HCT116 (cell line): ENCODE measurements at regions of chr1 and their contacts with region 1.

Region 1: DNA sequence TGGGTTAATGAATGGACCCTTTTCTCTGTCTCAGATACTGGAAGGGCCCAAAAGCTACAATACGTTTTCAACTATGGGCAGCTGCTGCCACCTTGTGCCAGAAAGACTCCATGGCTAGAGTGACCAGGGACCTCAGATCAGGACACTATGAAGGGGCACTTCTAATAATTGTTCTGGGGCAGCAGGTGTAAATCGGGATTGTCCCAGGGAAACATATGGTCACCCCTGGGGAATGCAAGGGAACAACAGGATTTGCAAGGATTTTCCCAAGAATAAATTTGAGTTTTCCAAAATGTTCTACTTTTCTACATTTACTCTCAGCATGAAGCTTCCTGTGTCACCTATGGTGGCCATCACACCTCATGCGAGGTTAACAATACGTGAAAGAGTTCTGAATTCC is 12.0 kb upstream of the FCAMR start:
- DNase-seq: peak; percentile 27
- ATAC-seq: peak; percentile 95
- H3K4me3 ChIP-seq: no peak overlapping the region
- H3K27ac ChIP-seq: no peak overlapping the region
- H3K4me1 ChIP-seq: no peaks in the 10 kb centered on the region
- H3K27me3 ChIP-seq: no peaks in the 10 kb centered on the region
- CTCF ChIP-seq: peak; percentile 77 to 87 (median 87)
- POLR2A ChIP-seq: no peak
- RAD21 ChIP-seq: peak; percentile 89

Region 2: GRCh38 chr1:206479183-206480125 is 502.8 kb before region 1 on chr1:
- CTCF ChIA-PET with region 1: interaction called, 6 read pairs
- POLR2A ChIA-PET with region 1: no interaction called
- RAD21 ChIA-PET with region 1: interaction called in 1 of 2 experiments, 7 read pairs
- intact Hi-C with region 1: loop called (anchors 5 kb)
- DNase-seq: no peak
- ATAC-seq: peak; percentile 89
- H3K4me3 ChIP-seq: no peak overlapping the region
- H3K27ac ChIP-seq: no peak overlapping the region
- H3K4me1 ChIP-seq: peaks cover 0 to 6% of the 10 kb centered on the region in 2 experiments; a peak in 1 of 4 replicates
- H3K27me3 ChIP-seq: no peaks in the 10 kb centered on the region
- CTCF ChIP-seq: peak; percentile 73 to 87 (median 77); a peak in 5 of 6 replicates
- POLR2A ChIP-seq: no peak
- RAD21 ChIP-seq: peak; percentile 83

Region 3: GRCh38 chr1:206635080-206635977 is 346.9 kb before region 1 on chr1 and contains the start of gene DYRK3:
- CTCF ChIA-PET with region 1: interaction called, 21 read pairs
- POLR2A ChIA-PET with region 1: no interaction called
- RAD21 ChIA-PET with region 1: interaction called in 1 of 2 experiments, 3 read pairs
- intact Hi-C with region 1: loop called (anchors 10 kb)
- DNase-seq: peak; percentile 72
- ATAC-seq: peak; percentile 91
- H3K4me3 ChIP-seq: peak within 1 kb of the TSS; percentile 67 to 78
- H3K27ac ChIP-seq: peak within 1 kb of the TSS; percentile 32; the same call in 1 of the 2 replicates
- H3K4me1 ChIP-seq: peaks cover 4 to 26% of the 10 kb centered on the region in 2 experiments; a peak in 3 of 4 replicates
- H3K27me3 ChIP-seq: no peaks in the 10 kb centered on the region
- CTCF ChIP-seq: no peak
- POLR2A ChIP-seq: peak; percentile 89
- RAD21 ChIP-seq: no peak
- total RNA-seq, gene DYRK3: 7.1 TPM

Region 4: DNA sequence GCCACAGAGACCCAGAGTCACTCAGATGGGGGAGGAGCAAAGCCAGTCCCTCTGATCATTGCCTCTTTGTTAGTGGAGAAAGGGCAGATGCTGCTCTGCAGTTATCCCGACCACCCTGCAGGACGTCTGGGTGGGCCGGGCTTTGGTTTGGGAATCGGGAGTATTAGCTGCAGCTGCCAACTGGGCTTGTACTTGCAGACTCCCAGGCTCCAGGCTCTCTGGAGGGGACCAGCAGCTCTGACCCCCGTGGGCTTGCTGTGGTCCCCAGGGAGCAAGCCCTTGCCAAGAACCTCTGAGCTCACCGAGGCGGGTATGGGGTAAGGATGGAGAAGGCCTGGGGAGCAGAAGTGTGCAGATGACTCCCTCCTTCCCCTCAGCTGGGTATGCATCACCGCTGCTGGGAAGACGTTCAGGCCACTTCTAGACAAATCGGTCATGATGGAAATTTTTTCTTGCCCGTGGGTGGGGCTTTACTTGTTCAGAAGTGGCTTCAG is 275.9 kb before region 1 on chr1:
- CTCF ChIA-PET with region 1: no interaction called
- POLR2A ChIA-PET with region 1: no interaction called
- RAD21 ChIA-PET with region 1: no interaction called
- intact Hi-C with region 1: no loop called
- DNase-seq: no peak
- ATAC-seq: no peak
- H3K4me3 ChIP-seq: no peak overlapping the region
- H3K27ac ChIP-seq: no peak overlapping the region
- H3K4me1 ChIP-seq: peaks cover 0 to 10% of the 10 kb centered on the region in 2 experiments; a peak in 1 of 4 replicates
- H3K27me3 ChIP-seq: no peaks in the 10 kb centered on the region
- CTCF ChIP-seq: no peak
- POLR2A ChIP-seq: no peak
- RAD21 ChIP-seq: no peak

Region 5: GRCh38 chr1:206734499-206735142 is 247.6 kb before region 1 on chr1:
- CTCF ChIA-PET with region 1: interaction called, 20 read pairs
- POLR2A ChIA-PET with region 1: no interaction called
- RAD21 ChIA-PET with region 1: interaction called, 4 read pairs
- intact Hi-C with region 1: loop called (anchors 1 kb)
- DNase-seq: peak; percentile 12
- ATAC-seq: peak; percentile 74
- H3K4me3 ChIP-seq: no peak overlapping the region
- H3K27ac ChIP-seq: no peak overlapping the region
- H3K4me1 ChIP-seq: no peaks in the 10 kb centered on the region
- H3K27me3 ChIP-seq: no peaks in the 10 kb centered on the region
- CTCF ChIP-seq: peak; percentile 55 to 78 (median 74)
- POLR2A ChIP-seq: no peak
- RAD21 ChIP-seq: peak; percentile 67

Region 6: DNA sequence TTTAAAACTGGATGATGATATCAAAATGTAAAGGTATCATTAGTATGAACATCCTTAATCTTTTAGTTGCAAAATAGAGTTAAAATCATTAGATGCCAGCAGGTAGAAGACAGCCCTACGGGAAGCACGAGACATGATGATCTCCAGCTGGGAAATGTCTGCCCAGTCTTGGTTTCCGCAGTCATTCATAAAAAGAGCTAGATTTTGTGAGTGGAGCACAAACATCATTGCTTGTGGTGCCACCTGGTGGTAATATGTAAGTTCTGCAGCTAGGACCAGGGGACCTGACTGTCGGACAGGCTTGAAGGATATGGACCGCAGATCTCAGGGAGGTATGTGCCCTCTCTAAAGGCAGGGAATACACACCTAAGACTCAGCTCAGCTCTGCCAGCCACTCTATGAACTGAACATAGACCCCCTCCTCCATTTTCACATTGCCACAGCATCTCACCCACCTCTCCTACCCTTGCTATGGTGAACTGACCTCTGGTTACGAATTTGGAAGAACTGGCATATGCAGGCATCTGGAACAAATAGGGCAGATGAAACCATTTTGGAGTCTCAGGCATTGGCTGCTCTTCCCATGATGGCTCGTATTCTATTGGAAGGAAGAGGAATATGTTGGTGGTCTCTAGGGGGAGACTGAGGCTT is 69.6 kb before region 1 on chr1:
- CTCF ChIA-PET with region 1: interaction called, 48 read pairs
- POLR2A ChIA-PET with region 1: no interaction called
- RAD21 ChIA-PET with region 1: interaction called, 5 to 8 read pairs
- intact Hi-C with region 1: loop called (anchors 2 kb)
- DNase-seq: peak; percentile 64
- ATAC-seq: peak; percentile 57
- H3K4me3 ChIP-seq: no peak overlapping the region
- H3K27ac ChIP-seq: no peak overlapping the region
- H3K4me1 ChIP-seq: peaks cover 0 to 20% of the 10 kb centered on the region in 2 experiments; a peak in 2 of 4 replicates
- H3K27me3 ChIP-seq: no peaks in the 10 kb centered on the region; the same call in 1 of the 2 replicates
- CTCF ChIP-seq: peak; percentile 78 to 80 (median 79)
- POLR2A ChIP-seq: no peak
- RAD21 ChIP-seq: peak; percentile 88

Region 7: DNA sequence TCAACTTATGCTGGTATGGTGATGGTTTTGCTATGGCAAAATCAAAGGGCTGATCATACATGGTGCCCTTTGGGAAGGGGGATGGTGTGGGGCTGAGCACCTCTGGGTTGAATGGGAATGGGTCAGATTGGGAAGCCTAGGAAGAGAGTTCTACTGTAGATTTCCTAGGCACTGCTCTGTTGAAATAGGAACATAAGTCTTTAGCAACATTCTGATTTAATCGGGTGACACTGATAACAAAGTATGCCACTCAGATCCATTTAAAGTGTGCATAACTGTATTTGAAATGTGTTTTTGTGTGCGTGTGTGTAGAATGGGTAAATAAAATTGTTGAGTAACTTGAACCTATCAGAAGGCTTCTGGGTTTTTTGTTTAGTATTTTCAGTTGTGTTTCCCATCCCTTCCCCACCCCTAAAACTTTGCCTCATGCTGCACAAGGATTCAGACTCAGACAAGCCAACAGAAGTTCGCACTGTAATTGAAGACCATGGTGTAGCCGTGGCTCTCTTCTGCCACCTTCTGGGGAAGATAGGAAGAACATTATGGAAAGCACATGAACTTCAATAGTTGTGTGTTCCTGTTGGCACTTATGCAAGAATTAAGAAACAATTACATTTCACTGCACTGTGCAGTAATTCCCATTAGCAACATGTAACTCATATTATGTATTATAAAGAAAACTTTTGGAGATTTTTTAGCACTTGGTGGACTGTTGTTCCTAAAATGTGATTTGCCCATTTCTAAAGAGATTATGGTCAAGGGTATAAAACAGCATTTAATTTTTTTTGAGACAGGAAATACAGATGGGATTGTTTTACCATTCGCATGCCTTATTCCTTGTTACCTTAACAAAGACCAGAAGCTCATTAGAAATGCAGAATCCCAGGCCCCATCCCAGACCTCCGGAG is 95.5 kb after region 1 on chr1:
- CTCF ChIA-PET with region 1: interaction called, 3 read pairs
- POLR2A ChIA-PET with region 1: no interaction called
- RAD21 ChIA-PET with region 1: no interaction called
- intact Hi-C with region 1: loop called (anchors 5 kb)
- DNase-seq: peak; percentile 51
- ATAC-seq: peak; percentile 91
- H3K4me3 ChIP-seq: no peak overlapping the region
- H3K27ac ChIP-seq: no peak overlapping the region
- H3K4me1 ChIP-seq: no peaks in the 10 kb centered on the region
- H3K27me3 ChIP-seq: no peaks in the 10 kb centered on the region
- CTCF ChIP-seq: peak; percentile 82 to 87 (median 84); a peak in 5 of 6 replicates
- POLR2A ChIP-seq: no peak
- RAD21 ChIP-seq: peak; percentile 93